MCF 10A (cell line): ENCODE measurements at regions of chr6 and their contacts with region 1.

Region 1: DNA sequence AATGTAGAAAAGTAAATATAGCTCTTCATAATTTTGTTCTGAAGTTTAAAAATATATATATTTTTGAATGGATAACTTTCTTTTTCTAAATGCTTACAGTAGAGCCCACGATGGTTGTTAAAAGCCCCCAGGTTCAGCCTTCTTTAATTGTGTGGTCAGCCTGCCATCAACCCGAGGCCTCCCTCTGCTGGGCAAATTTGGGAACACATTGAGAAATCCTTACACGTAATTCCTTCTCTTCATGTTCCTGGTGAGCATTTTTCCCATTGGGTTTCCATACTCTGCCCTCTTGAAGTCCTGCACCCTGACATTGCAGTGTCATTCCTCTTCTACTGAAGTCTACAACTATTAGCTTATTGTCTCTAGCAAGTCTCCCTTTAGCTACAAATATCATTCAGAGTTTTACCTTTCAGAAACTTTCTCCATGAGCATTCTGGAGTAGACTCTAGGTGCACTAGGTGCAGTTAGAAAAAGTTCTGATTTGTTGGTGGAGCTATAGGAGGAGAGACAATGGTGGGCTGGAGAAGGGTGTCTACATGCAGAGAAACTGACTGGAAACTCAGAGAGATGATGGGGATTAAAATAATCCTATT is 40.6 kb downstream of the TRIM38 start:
- DNase-seq: peak; percentile 64
- H3K4me3 Mint-ChIP-seq: no peak overlapping the region
- H3K27ac Mint-ChIP-seq: no peak overlapping the region
- H3K4me1 Mint-ChIP-seq: peaks cover under 1% of the 10 kb centered on the region
- H3K27me3 Mint-ChIP-seq: no peaks in the 10 kb centered on the region
- CTCF ChIP-seq: peak; percentile 63

Region 2: DNA sequence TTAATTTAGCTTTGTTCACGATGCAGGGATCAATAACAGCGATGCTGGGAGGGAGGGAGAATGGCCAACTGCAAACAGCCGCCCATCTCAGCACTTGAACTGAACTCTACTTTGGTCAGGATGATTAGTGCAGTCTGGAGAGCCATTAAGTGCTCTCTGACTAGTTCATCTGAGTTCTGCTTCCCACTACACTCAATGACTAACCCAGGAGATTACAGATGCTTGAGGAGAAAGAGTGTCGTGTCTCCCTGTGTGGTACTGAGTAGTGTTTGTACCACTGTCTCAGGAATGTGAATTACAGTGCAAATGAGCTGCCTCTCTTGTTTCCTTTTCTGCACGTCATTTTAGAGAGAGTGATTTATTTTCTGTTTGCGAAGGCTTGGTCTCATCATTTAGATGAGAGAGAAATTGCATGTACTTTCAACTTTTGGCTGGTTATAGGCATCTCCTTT is 700.5 kb before region 1 on chr6:
- CTCF ChIA-PET with region 1: no interaction called
- POLR2A ChIA-PET with region 1: no interaction called
- intact Hi-C with region 1: no loop called
- DNase-seq: no peak
- H3K4me3 Mint-ChIP-seq: no peak overlapping the region
- H3K27ac Mint-ChIP-seq: no peak overlapping the region
- H3K4me1 Mint-ChIP-seq: peaks cover 5% of the 10 kb centered on the region
- H3K27me3 Mint-ChIP-seq: no peaks in the 10 kb centered on the region
- CTCF ChIP-seq: no peak

Region 3: DNA sequence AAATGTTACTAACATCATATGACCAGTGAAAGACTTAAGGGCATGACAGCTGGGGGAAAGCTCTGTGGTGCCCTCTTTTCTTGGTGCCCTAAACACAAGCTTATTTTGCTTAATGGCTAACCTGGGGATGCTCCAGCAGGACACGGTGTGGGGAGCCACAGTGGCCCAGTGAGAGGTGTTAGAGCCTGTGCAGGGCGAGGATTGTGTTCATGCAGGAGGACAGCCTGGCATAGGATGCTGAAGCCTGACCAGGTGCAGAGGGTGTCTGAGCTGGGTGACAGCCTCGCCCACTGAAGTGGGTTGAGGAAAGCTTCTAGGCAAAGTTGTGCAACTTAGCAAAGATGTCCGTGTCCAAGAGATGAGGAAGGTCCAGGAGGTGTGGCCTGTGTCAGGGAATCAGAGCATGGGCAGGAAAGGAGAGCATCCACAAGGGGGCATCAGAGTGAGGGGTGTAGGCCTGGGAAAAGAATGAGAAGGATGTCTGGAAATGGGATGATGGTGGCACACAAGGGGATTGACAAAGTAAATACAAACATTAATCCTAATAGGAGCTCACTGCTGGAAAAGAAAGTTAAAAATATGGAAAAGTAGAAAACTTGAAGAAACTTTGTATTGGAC is 214.8 kb before region 1 on chr6:
- CTCF ChIA-PET with region 1: no interaction called
- POLR2A ChIA-PET with region 1: no interaction called
- intact Hi-C with region 1: loop called (anchors 2 kb)
- DNase-seq: peak; percentile 77
- H3K4me3 Mint-ChIP-seq: no peak overlapping the region
- H3K27ac Mint-ChIP-seq: no peak overlapping the region
- H3K4me1 Mint-ChIP-seq: no peaks in the 10 kb centered on the region
- H3K27me3 Mint-ChIP-seq: no peaks in the 10 kb centered on the region
- CTCF ChIP-seq: peak; percentile 32

Region 4: DNA sequence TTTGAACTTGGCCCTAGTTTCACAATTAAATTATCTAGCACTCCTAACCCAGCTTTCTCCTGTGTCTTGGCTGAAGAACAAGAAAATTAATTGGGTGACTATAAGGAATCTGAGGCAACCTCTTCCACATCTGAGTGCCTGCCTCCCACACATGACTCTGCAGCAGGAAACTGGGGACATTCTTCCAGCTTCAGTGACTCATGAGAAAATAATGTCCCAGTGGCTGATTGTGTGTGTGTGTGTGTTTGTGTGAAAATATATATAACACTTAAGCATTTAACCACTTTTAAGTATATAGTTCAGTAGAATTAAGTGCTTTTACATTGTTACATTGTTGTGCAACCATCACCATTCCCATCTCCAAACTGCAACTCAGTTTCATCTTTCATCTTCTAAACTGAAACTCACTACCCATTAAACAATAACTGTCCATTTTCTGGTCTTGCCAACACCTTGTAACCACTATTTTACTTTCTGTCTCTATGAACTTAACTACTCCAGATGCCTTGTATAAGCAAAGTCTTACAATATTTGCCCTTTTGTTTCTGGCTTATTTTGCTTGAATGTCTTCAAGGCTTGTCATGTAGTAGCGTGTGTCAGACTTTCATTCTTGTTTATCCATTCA is 31.9 kb before region 1 on chr6:
- CTCF ChIA-PET with region 1: interaction called, 11 read pairs
- POLR2A ChIA-PET with region 1: no interaction called
- intact Hi-C with region 1: no loop called
- DNase-seq: peak; percentile 83
- H3K4me3 Mint-ChIP-seq: peak overlapping the region; percentile 24
- H3K27ac Mint-ChIP-seq: peak overlapping the region; percentile 77
- H3K4me1 Mint-ChIP-seq: peaks cover 38% of the 10 kb centered on the region
- H3K27me3 Mint-ChIP-seq: no peaks in the 10 kb centered on the region
- CTCF ChIP-seq: no peak

Region 5: GRCh38 chr6:26017632-26017966 is 14.4 kb after region 1 on chr6:
- CTCF ChIA-PET with region 1: interaction called, 81 read pairs
- POLR2A ChIA-PET with region 1: interaction called, 147 read pairs
- intact Hi-C with region 1: no loop called
- DNase-seq: peak; percentile 93
- H3K4me3 Mint-ChIP-seq: peak overlapping the region; percentile 75
- H3K27ac Mint-ChIP-seq: peak overlapping the region; percentile 73
- H3K4me1 Mint-ChIP-seq: no peaks in the 10 kb centered on the region
- H3K27me3 Mint-ChIP-seq: no peaks in the 10 kb centered on the region
- CTCF ChIP-seq: peak; percentile 26

Region 6: GRCh38 chr6:26196846-26197648 is 193.8 kb after region 1 on chr6:
- CTCF ChIA-PET with region 1: no interaction called
- POLR2A ChIA-PET with region 1: no interaction called
- intact Hi-C with region 1: no loop called
- DNase-seq: peak; percentile 94
- H3K4me3 Mint-ChIP-seq: peak overlapping the region; percentile 93
- H3K27ac Mint-ChIP-seq: peak overlapping the region; percentile 96
- H3K4me1 Mint-ChIP-seq: peaks cover 28% of the 10 kb centered on the region
- H3K27me3 Mint-ChIP-seq: no peaks in the 10 kb centered on the region
- CTCF ChIP-seq: no peak

Region 7: DNA sequence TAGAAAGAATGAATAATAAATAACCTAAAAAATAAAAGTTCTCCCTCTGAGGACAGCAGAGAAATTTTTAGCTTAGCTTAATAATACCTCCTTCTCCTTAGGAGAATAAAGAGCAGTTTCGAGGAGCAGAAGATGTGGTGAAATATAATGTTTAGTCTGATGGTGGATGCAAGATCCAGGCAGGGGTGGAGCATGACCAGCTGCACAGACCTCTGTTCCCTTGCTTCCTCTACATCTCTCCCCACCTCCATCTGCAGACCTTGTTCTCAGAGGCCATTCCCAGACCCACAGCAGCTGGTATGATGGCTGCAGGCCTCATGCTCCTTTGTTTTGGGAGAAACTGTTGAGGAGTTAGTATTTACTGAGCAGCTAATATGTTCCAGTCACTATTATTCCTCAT is 363.3 kb after region 1 on chr6:
- CTCF ChIA-PET with region 1: no interaction called
- POLR2A ChIA-PET with region 1: no interaction called
- intact Hi-C with region 1: no loop called
- DNase-seq: peak; percentile 14
- H3K4me3 Mint-ChIP-seq: no peak overlapping the region
- H3K27ac Mint-ChIP-seq: no peak overlapping the region
- H3K4me1 Mint-ChIP-seq: peaks cover 11% of the 10 kb centered on the region
- H3K27me3 Mint-ChIP-seq: no peaks in the 10 kb centered on the region
- CTCF ChIP-seq: no peak